Activated CD4-positive, alpha-beta memory T cell treated with anti-CD3 and anti-CD28 coated beads, Interleukin-2, amount 10 ng/mL, durations not matched to agents 7 days and 5 days (primary cell): ENCODE measurements at regions of chr4 and their contacts with region 1.

Region 1: DNA sequence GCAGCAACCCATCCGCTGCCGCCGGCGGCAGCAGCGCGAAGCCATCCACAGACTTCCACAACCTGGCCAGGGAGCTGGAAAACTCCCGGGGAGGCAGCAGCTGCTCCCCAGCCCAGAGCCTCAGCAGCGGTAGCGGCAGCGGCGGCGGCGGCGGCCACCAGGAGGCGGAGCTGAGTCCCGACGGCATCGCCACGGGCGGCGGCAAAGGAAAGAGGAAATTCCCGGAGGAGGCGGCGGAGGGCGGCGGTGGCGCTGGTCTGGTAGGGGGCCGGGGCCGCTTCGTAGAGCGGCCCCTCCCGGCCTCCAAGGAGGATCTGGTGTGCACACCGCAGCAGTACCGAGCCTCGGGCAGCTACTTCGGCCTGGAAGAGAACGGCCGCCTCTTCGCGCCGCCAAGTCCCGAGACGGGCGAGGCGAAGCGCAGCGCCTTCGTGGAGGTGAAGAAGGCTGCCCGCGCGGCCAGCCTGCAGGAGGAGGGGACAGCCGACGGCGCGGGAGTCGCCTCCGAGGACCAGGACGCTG is 4.9 kb downstream of the PRDM8 start:
- DNase-seq: peak; percentile 80
- H3K4me3 Mint-ChIP-seq: peak overlapping the region; percentile 76
- H3K27ac Mint-ChIP-seq: peak overlapping the region; percentile 67
- H3K4me1 Mint-ChIP-seq: peaks cover 28% of the 10 kb centered on the region
- H3K27me3 Mint-ChIP-seq: peaks cover 11% of the 10 kb centered on the region

Region 2: DNA sequence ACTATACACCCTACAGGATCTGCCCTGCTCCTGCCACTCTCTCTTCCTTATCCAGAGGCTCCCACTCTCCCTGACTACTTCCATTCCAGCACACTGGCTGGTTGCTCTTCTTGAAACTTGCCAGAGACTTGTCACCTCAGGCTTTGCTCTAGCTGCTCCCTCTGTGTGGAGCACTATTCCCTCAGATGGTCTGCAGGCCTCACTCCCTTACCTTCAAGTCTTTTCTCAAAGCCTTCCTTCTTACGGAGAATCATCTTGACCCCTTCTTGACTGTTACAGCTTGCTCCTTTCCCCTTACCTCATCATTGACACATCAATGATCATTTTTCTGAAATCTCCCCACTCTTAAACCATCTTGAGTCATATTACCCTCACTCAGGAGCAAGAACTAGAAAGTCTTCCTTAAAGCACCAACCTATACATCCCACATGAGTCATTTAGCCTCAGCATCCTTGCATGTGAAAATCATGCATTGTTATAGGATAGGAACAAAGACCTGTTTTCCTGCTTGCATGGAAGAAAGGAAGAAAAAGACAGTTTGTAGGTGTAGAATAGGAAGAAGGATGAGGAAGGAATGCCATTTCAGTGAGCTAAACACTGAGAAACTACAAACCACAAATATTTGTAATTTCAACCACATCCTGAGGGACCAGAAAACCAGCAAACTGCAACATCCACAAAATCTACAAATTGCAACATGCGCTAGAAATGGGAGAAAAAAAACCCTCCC is 185.0 kb before region 1 on chr4:
- CTCF ChIA-PET with region 1: interaction called, 4 read pairs
- POLR2A ChIA-PET with region 1: interaction called, 14 read pairs
- DNase-seq: no peak
- H3K4me3 Mint-ChIP-seq: no peak overlapping the region
- H3K27ac Mint-ChIP-seq: no peak overlapping the region
- H3K4me1 Mint-ChIP-seq: peaks cover 26% of the 10 kb centered on the region
- H3K27me3 Mint-ChIP-seq: no peaks in the 10 kb centered on the region

Region 3: GRCh38 chr4:80072744-80073472 is 129.3 kb before region 1 on chr4 and contains the start of gene ANTXR2:
- CTCF ChIA-PET with region 1: interaction called, 14 read pairs
- POLR2A ChIA-PET with region 1: interaction called, 38 read pairs
- DNase-seq: peak; percentile 83
- H3K4me3 Mint-ChIP-seq: peak within 1 kb of the TSS; percentile 87
- H3K27ac Mint-ChIP-seq: peak within 1 kb of the TSS; percentile 92
- H3K4me1 Mint-ChIP-seq: peaks cover 73% of the 10 kb centered on the region
- H3K27me3 Mint-ChIP-seq: no peaks in the 10 kb centered on the region
- total RNA-seq, gene ANTXR2: 113 to 114 TPM

Region 4: DNA sequence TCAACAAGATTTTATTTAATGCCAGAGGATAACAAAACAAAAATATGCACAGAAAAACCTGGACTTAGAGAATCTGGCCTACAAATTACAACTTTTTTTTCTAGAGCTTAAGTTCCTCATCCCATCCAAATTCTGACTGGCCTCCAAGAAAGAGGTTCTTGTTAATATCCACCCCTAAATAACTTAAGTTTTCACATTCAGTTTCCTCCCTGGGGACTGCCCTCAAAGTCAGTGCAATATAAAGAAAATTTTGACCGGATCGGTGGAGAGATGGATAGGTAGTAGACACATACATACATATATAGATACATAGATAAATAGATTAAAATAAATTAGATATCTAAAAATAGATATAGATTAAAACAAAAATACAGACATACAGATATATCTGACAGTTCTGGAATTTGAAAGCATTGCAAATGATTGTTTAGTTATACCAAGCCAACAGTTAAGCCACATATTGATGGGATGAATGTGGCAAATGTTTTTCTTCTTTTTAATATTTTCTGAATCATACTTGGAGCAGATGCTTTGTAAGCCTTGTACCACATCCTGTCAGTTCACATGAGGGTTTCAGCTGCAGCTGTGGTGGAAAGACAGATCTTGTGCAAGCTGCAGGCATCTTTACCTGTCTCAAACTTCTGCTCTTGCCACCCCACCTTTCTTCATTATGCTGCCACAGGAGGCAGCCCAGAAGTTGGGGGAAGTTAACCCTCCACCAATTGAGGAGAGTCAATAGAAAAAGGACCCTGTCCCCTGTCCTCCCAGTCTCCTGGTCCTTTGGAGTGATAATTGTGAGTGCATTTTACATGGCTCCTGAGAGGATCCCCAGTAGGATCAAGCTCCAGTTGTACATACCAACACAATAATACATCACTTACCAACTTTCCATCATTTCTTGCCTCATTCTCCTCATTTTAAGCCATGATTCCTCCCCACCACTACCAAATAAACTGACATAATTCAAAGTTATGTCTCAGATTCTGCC is 63.4 kb before region 1 on chr4:
- CTCF ChIA-PET with region 1: interaction called, 23 read pairs
- POLR2A ChIA-PET with region 1: interaction called, 8 read pairs
- DNase-seq: peak; percentile 79
- H3K4me3 Mint-ChIP-seq: peak overlapping the region; percentile 18
- H3K27ac Mint-ChIP-seq: peak overlapping the region; percentile 88
- H3K4me1 Mint-ChIP-seq: peaks cover 63% of the 10 kb centered on the region
- H3K27me3 Mint-ChIP-seq: no peaks in the 10 kb centered on the region

Region 5: DNA sequence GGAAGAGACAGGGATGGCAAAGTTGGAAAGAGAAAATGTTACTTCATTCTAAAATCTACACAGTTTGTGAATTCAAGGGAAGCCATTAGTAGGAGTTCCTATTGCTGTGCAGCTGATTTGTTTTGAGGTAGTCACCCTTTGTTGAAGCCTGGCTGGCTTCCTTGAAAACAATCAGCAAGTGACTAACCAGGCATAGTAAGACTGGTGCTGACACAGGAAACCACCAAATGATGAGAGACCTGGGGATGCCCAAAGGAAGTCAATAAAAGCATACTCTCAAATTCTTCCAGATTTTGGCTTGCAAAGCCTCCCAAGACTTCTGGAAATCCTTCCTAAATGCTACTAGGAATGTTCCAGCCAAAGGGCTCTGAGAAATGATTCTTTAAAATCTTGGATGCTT is 28.9 kb before region 1 on chr4:
- CTCF ChIA-PET with region 1: interaction called, 18 read pairs
- POLR2A ChIA-PET with region 1: interaction called, 19 read pairs
- DNase-seq: peak; percentile 71
- H3K4me3 Mint-ChIP-seq: peak overlapping the region; percentile 55
- H3K27ac Mint-ChIP-seq: peak overlapping the region; percentile 97
- H3K4me1 Mint-ChIP-seq: peaks cover 56% of the 10 kb centered on the region
- H3K27me3 Mint-ChIP-seq: no peaks in the 10 kb centered on the region

Region 6: GRCh38 chr4:80215449-80216052 is 13.3 kb after region 1 on chr4:
- CTCF ChIA-PET with region 1: interaction called, 24 read pairs
- POLR2A ChIA-PET with region 1: interaction called, 10 read pairs
- DNase-seq: no peak
- H3K4me3 Mint-ChIP-seq: no peak overlapping the region
- H3K27ac Mint-ChIP-seq: no peak overlapping the region
- H3K4me1 Mint-ChIP-seq: peaks cover 1% of the 10 kb centered on the region
- H3K27me3 Mint-ChIP-seq: peaks cover 40% of the 10 kb centered on the region